Lower leg skin (tissue), 4 donors: ENCODE measurements at regions of chr13 and their contacts with region 1.

Region 1: DNA sequence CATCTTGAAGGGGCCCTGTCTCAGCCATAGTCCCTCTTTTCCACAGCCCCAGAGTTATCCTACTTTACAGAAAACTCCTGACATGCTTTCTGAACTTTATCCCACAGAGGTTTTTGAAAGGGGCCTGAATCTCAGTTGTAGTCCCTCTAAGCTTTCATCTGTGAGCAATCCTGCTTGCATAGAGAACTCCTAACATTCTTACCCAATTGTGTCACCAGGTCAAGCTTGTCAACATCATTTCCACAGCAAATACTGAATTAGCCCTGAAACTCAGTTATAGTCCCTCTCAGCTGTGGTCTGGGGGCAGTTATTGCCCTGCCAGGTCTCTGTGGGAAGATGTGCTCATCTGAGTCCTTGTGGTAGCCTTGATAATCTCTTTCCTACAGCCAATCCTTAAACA is 2190.3 kb upstream of the PCDH20 start:
- DNase-seq: no peak
- H3K4me3 ChIP-seq: no peak overlapping the region
- CTCF ChIP-seq: no peak
- POLR2A ChIP-seq: no peak

Region 2: GRCh38 chr13:64753233-64754000 is 1147.5 kb after region 1 on chr13:
- intact Hi-C with region 1: loop called (anchors 5 kb)
- DNase-seq: no peak
- H3K4me3 ChIP-seq: no peak overlapping the region
- CTCF ChIP-seq: no peak
- POLR2A ChIP-seq: no peak